Colonic mucosa (tissue), 4 donors: ENCODE measurements at regions of chr19 and their contacts with region 1.

Region 1: DNA sequence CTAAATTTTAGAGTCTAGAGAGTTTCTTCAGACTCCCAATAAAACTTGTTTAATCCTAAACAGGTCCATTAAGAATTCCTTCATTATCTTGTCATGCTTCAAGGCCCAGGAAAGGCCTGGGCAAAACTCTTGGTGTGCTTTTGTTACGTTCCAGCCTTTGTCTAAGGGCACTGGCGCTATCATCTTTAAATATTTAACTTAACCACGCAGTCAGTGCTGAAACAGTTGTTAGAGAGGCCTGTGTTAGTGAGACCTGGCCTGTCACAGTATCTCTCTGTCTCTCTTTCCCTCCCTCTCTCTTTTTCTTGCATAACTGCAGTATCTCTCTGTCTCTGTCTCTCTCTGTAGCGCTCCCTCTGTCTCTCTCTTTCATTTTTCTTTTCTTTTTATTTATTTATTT is 8.2 kb upstream of the OR1M1 start:
- DNase-seq: no peak
- H3K4me3 ChIP-seq: no peak overlapping the region
- H3K27ac ChIP-seq: no peak overlapping the region
- H3K4me1 ChIP-seq: no peaks in the 10 kb centered on the region
- H3K27me3 ChIP-seq: no peaks in the 10 kb centered on the region
- CTCF ChIP-seq: no peak

Region 2: DNA sequence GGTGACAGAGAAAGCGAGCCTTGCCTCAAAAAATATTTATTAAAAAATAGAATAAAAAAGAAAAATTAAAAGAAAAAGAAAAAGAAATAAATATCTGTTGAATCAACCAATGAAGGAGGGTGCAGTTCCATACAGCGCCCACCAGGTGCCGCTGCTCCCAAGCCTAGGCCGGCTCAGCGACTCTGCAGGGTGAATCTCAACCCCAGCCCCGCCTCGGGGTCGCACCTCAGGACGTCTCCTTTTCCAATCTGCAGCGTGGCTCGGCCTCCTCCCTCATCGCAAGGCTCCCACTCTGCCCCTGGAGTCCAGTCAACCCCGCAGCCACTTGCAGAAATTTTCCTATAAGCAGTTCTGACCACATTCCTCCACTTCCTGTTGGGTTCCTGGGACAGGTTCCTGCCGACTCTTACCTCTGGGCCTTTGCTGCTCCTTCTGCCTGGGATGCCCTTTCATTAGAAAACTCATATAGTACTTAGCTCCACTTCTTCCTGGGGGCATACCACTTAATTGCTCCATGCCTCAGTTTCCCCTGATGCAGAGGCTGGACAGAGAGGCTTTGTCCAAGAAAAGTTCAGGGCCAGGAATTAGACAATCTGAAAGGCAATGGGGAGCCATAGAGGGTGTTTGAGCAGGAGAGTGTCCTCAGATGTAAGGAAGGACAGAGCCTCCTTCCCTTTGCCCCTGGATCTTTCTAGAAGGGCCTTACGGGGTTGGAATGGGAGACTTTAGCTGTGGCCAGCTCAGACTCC is 423.9 kb before region 1 on chr19:
- intact Hi-C with region 1: loop called (anchors 1 kb)
- DNase-seq: peak; percentile 35
- H3K4me3 ChIP-seq: no peak overlapping the region
- H3K27ac ChIP-seq: no peak overlapping the region
- H3K4me1 ChIP-seq: no peaks in the 10 kb centered on the region
- H3K27me3 ChIP-seq: no peaks in the 10 kb centered on the region
- CTCF ChIP-seq: peak; percentile 98

Region 3: GRCh38 chr19:8840708-8841107 is 237.9 kb before region 1 on chr19:
- intact Hi-C with region 1: no loop called
- DNase-seq: no peak
- H3K4me3 ChIP-seq: no peak overlapping the region
- H3K27ac ChIP-seq: no peak overlapping the region
- H3K4me1 ChIP-seq: no peaks in the 10 kb centered on the region
- H3K27me3 ChIP-seq: no peaks in the 10 kb centered on the region
- CTCF ChIP-seq: no peak